ENCODE measurements at regions of chr5 and their contacts with region 1.

Region 1: DNA sequence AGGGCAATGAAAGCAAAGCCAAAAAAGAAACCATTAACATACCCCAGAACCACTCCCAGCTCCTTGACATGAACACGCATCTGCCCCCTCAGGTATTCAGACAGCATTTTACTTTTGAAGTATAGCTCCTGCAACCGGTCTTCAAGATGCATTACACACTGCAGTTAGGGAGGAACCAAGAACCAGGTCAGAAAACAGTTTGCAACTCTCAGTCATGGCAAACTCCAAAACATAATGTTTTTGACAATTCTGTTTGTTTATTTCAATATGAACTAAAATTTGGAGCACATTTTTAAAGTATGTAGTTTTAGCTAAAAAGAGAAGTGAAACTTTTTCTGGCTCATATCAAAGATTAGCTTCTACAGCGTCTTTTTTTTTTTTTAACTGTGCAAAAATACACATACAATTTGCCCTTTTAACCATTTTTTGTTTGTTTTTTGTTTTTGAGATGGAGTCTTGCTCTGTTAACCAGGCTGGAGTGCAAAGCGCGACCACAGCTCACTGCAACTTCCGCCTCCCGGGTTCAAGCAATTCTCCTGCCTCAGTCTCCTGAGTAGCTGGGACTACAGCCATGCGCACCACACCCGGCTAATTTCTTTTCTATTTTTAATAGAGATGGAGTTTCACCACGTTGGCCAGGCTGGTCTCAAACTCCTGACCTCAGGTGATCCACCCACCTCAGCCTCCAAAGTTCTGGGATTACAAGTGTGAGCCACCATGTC is 12.2 kb upstream of the RAPGEF6 start:
- DNase-seq: no peak
- ATAC-seq: peak; percentile 92
- H3K4me3 Mint-ChIP-seq: peak overlapping the region; percentile 76
- H3K27ac Mint-ChIP-seq: peak overlapping the region; percentile 90
- H3K4me1 Mint-ChIP-seq: peaks cover 37% of the 10 kb centered on the region
- H3K27me3 Mint-ChIP-seq: no peaks in the 10 kb centered on the region
- CTCF ChIP-seq: no peak

Region 2: DNA sequence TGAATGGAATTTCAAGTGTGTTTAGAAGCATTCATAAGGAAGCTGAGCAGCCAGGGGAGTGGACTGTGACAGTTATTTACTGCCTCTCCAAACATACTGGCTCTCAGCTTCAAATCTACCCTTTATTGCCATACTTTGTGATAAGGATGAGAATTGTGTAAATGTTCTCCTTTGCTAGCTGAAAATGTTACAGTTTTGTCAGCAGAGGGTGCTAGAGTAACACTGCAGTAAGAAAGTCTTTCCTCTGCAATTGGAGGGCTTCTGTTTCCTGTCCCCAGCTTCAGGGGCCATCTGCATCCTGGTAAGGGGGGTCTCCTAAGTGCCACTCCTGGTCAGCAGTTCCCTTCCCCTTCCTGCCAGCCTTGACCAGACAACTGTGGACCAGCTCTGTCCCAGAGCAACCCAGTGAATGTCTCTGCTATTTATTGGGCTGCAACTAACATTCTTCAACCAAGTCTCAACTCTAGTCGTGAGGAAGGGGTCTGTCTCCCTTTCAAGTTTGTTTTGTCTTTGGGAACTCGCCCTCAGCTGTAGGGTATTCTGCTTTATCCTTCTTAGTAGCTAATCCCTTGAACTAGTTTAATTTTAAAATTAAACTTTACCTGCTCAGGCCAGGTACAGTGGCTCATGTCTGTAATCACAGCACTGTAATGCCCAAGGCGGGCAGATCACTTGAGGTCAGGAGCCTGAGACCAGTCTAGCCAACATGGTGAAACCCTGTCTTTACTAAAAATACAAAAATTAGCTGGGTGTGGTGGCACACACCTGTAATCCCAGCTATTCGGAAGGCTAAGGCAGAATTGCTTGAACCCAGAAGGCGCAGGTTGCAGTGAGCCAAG is 57.5 kb before region 1 on chr5:
- CTCF ChIA-PET with region 1: interaction called, 34 read pairs
- POLR2A ChIA-PET with region 1: no interaction called
- intact Hi-C with region 1: loop called (anchors 1 kb)
- DNase-seq: no peak
- ATAC-seq: peak; percentile 57
- H3K4me3 Mint-ChIP-seq: no peak overlapping the region
- H3K27ac Mint-ChIP-seq: no peak overlapping the region
- H3K4me1 Mint-ChIP-seq: peaks cover 25% of the 10 kb centered on the region
- H3K27me3 Mint-ChIP-seq: no peaks in the 10 kb centered on the region
- CTCF ChIP-seq: peak; percentile 48

Region 3: GRCh38 chr5:131610198-131611063 is 36.8 kb before region 1 on chr5:
- CTCF ChIA-PET with region 1: interaction called, 3 read pairs
- POLR2A ChIA-PET with region 1: interaction called, 11 read pairs
- intact Hi-C with region 1: no loop called
- DNase-seq: no peak
- ATAC-seq: no peak
- H3K4me3 Mint-ChIP-seq: no peak overlapping the region
- H3K27ac Mint-ChIP-seq: no peak overlapping the region
- H3K4me1 Mint-ChIP-seq: peaks cover 68% of the 10 kb centered on the region
- H3K27me3 Mint-ChIP-seq: no peaks in the 10 kb centered on the region
- CTCF ChIP-seq: no peak

Region 4: GRCh38 chr5:131664929-131665328 is 17.7 kb after region 1 on chr5:
- CTCF ChIA-PET with region 1: no interaction called
- POLR2A ChIA-PET with region 1: no interaction called
- intact Hi-C with region 1: loop called (anchors 2 kb)
- DNase-seq: no peak
- ATAC-seq: no peak
- H3K4me3 Mint-ChIP-seq: no peak overlapping the region
- H3K27ac Mint-ChIP-seq: no peak overlapping the region
- H3K4me1 Mint-ChIP-seq: no peaks in the 10 kb centered on the region
- H3K27me3 Mint-ChIP-seq: no peaks in the 10 kb centered on the region
- CTCF ChIP-seq: no peak

Region 5: GRCh38 chr5:131679913-131680312 is 32.7 kb after region 1 on chr5:
- CTCF ChIA-PET with region 1: interaction called, 3 read pairs
- POLR2A ChIA-PET with region 1: no interaction called
- intact Hi-C with region 1: loop called (anchors 5 kb)
- DNase-seq: no peak
- ATAC-seq: no peak
- H3K4me3 Mint-ChIP-seq: no peak overlapping the region
- H3K27ac Mint-ChIP-seq: no peak overlapping the region
- H3K4me1 Mint-ChIP-seq: peaks cover 22% of the 10 kb centered on the region
- H3K27me3 Mint-ChIP-seq: no peaks in the 10 kb centered on the region
- CTCF ChIP-seq: no peak

Measured in activated B cell treated with CpG ODN at 0.5 μM for 24 hours (primary cell).